ENCODE measurements at regions of chr5 and their contacts with region 1.

Region 1: GRCh38 chr5:35926389-35927051 is 11.9 kb downstream of the CAPSL start:
- DNase-seq: peak; percentile 63 to 78 (median 72)
- H3K4me3 ChIP-seq: no peak overlapping the region
- H3K4me3 Mint-ChIP-seq: peak overlapping the region in 6 of 8 donors; percentile 60 to 82 (median 76)
- H3K27ac ChIP-seq: no peak overlapping the region
- H3K27ac Mint-ChIP-seq: peak overlapping the region in 3 of 7 donors; percentile 1 to 80 (median 49)
- H3K4me1 ChIP-seq: peaks cover 20% of the 10 kb centered on the region
- H3K4me1 Mint-ChIP-seq: peaks cover 26 to 38% (median 34%) of the 10 kb centered on the region in 4 donors
- H3K27me3 ChIP-seq: no peaks in the 10 kb centered on the region
- H3K27me3 Mint-ChIP-seq: peaks cover 5 to 7% of the 10 kb centered on the region in 2 donors

Region 2: GRCh38 chr5:35202319-35203111 is 724.0 kb before region 1 on chr5:
- CTCF ChIA-PET with region 1: no interaction called
- POLR2A ChIA-PET with region 1: no interaction called
- intact Hi-C with region 1: loop called (anchors 1 kb)
- DNase-seq: peak in 4 of 5 donors; percentile 5 to 12 (median 10)
- H3K4me3 ChIP-seq: no peak overlapping the region
- H3K4me3 Mint-ChIP-seq: no peak overlapping the region
- H3K27ac ChIP-seq: no peak overlapping the region
- H3K27ac Mint-ChIP-seq: no peak overlapping the region
- H3K4me1 ChIP-seq: no peaks in the 10 kb centered on the region
- H3K4me1 Mint-ChIP-seq: peaks cover 0 to 2% (median 0%) of the 10 kb centered on the region in 4 donors
- H3K27me3 ChIP-seq: no peaks in the 10 kb centered on the region
- H3K27me3 Mint-ChIP-seq: peaks cover 15 to 23% of the 10 kb centered on the region in 2 donors

Region 3: DNA sequence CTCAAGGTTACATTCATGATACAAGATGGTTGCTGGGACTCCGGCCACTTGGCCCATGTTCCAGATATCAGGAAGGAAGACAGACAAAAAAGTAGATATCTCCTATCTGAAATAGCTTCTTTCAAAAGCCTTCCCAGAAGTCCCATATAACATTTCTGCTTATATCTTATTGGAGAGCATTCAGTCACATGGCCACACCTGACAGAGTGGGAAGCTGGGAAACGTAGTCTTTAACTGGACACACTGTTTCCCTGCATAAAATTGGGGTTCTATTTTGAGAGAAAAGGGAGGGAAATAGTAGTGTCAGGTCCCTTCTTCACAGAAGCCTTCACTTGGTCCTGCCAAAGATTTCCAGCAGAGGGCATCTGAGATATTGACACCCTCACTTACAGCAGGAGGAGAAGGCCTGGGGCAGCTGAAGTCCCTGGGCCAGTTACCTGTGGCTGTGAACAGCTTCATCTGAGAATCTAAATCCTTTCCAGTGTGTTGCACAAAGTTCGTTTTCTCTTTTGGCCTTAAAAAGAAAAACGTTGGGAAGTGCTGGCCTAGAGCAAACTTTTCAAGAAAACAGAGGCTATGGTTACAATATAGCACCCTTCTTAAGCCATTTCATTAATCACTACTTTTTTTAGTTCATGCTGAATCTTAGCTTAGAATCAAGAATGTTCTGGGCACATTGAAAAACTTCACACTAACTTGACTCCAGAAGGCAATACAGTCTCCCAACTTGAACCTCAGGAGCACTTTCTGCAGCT is 275.3 kb before region 1 on chr5:
- CTCF ChIA-PET with region 1: interaction called, 544 read pairs
- POLR2A ChIA-PET with region 1: interaction called, 48 read pairs
- intact Hi-C with region 1: loop called (anchors 1 kb)
- DNase-seq: peak; percentile 64 to 69 (median 68)
- H3K4me3 ChIP-seq: no peak overlapping the region
- H3K4me3 Mint-ChIP-seq: no peak overlapping the region
- H3K27ac ChIP-seq: no peak overlapping the region
- H3K27ac Mint-ChIP-seq: peak overlapping the region in 6 of 7 donors; percentile 16 to 74 (median 56)
- H3K4me1 ChIP-seq: peaks cover 4% of the 10 kb centered on the region
- H3K4me1 Mint-ChIP-seq: peaks cover 5 to 18% (median 14%) of the 10 kb centered on the region in 4 donors
- H3K27me3 ChIP-seq: no peaks in the 10 kb centered on the region
- H3K27me3 Mint-ChIP-seq: no peaks in the 10 kb centered on the region

Region 4: GRCh38 chr5:35771839-35772238 is 154.7 kb before region 1 on chr5:
- CTCF ChIA-PET with region 1: interaction called, 129 read pairs
- POLR2A ChIA-PET with region 1: interaction called, 25 read pairs
- intact Hi-C with region 1: loop called (anchors 1 kb)
- DNase-seq: no peak
- H3K4me3 ChIP-seq: no peak overlapping the region
- H3K4me3 Mint-ChIP-seq: no peak overlapping the region
- H3K27ac ChIP-seq: no peak overlapping the region
- H3K27ac Mint-ChIP-seq: no peak overlapping the region
- H3K4me1 ChIP-seq: peaks cover 18% of the 10 kb centered on the region
- H3K4me1 Mint-ChIP-seq: peaks cover 16 to 40% (median 30%) of the 10 kb centered on the region in 4 donors
- H3K27me3 ChIP-seq: no peaks in the 10 kb centered on the region
- H3K27me3 Mint-ChIP-seq: peaks cover 2% of the 10 kb centered on the region in 2 donors

Region 5: GRCh38 chr5:35852084-35852734 is 74.3 kb before region 1 on chr5:
- CTCF ChIA-PET with region 1: interaction called, 5 read pairs
- POLR2A ChIA-PET with region 1: interaction called, 23 read pairs
- intact Hi-C with region 1: no loop called
- DNase-seq: peak; percentile 60 to 81 (median 62)
- H3K4me3 ChIP-seq: peak overlapping the region; percentile 54 to 71
- H3K4me3 Mint-ChIP-seq: peak overlapping the region; percentile 87 to 99 (median 95)
- H3K27ac ChIP-seq: peak overlapping the region; percentile 97
- H3K27ac Mint-ChIP-seq: peak overlapping the region; percentile 94 to 100 (median 100)
- H3K4me1 ChIP-seq: peaks cover 75% of the 10 kb centered on the region
- H3K4me1 Mint-ChIP-seq: peaks cover 52 to 85% (median 70%) of the 10 kb centered on the region in 4 donors
- H3K27me3 ChIP-seq: no peaks in the 10 kb centered on the region
- H3K27me3 Mint-ChIP-seq: no peaks in the 10 kb centered on the region

Region 6: GRCh38 chr5:35884115-35884788 is 42.3 kb before region 1 on chr5:
- CTCF ChIA-PET with region 1: interaction called, 4 read pairs
- POLR2A ChIA-PET with region 1: interaction called, 23 read pairs
- intact Hi-C with region 1: loop called (anchors 2 kb)
- DNase-seq: no peak
- H3K4me3 ChIP-seq: no peak overlapping the region
- H3K4me3 Mint-ChIP-seq: peak overlapping the region in 2 of 8 donors; percentile 16 to 17
- H3K27ac ChIP-seq: no peak overlapping the region
- H3K27ac Mint-ChIP-seq: peak overlapping the region in 6 of 7 donors; percentile 9 to 61 (median 36)
- H3K4me1 ChIP-seq: peaks cover 33% of the 10 kb centered on the region
- H3K4me1 Mint-ChIP-seq: peaks cover 32 to 49% (median 39%) of the 10 kb centered on the region in 4 donors
- H3K27me3 ChIP-seq: no peaks in the 10 kb centered on the region
- H3K27me3 Mint-ChIP-seq: no peaks in the 10 kb centered on the region

Region 7: DNA sequence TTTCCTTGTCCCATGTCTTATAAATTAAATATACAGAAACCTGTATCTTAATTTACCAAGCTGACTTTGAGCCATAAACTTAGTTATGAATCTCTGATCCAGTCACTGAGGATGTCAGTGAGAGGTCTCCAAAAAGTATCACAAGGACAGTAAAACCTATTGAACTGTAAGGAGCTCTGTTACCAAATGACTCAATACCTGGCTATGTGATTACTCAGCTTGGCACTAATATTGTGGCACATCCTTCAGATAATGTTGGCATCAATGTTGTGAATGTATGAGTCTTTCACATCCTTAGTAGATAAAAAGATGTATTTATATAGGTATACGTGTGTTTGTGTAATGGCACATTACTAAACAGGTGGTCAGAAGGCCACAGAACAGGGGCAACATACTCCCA is 29.9 kb after region 1 on chr5:
- CTCF ChIA-PET with region 1: no interaction called
- POLR2A ChIA-PET with region 1: no interaction called
- intact Hi-C with region 1: no loop called
- DNase-seq: no peak
- H3K4me3 ChIP-seq: no peak overlapping the region
- H3K4me3 Mint-ChIP-seq: no peak overlapping the region
- H3K27ac ChIP-seq: no peak overlapping the region
- H3K27ac Mint-ChIP-seq: no peak overlapping the region
- H3K4me1 ChIP-seq: no peaks in the 10 kb centered on the region
- H3K4me1 Mint-ChIP-seq: peaks cover 0 to 8% (median 5%) of the 10 kb centered on the region in 4 donors
- H3K27me3 ChIP-seq: peaks cover 6% of the 10 kb centered on the region
- H3K27me3 Mint-ChIP-seq: peaks cover 40 to 55% of the 10 kb centered on the region in 2 donors

Region 8: DNA sequence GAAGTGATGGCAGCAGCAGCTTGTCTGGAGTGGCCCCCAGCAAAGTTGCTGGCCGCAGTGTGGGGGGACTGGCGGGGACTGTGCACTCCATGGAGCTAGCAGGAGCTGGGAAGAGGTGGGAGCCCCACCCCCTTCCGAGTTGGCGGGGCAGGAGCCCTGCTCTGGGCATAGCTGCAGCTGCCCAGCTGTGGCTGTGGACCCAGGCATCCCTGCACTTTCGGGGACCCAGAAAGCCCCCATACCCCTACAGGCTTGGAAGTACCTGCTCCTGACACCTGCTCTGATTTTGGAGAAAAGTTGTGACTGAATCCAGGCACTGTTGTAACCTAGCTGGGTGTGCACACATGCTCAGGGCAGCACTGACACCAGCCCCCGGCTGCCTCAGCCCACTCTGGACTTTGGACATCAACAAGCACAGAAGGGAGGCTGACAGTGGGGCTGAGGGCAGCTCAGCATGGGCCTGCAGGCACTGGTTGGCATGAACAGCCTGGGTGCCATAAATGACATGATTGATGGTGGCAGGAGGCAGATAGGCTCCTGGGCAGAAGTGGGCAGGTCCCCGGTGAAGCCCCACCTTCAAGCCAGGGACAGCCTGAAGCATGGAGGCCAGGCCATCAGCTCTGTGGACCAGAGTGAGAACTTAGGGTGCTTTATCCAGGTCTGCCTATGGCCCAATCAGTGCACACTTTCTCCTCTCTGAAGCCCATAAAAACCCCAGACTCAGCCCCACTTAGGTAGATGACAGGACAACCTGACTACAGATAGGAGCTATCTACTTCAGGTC is 212.6 kb after region 1 on chr5:
- CTCF ChIA-PET with region 1: no interaction called
- POLR2A ChIA-PET with region 1: no interaction called
- intact Hi-C with region 1: no loop called
- DNase-seq: no peak
- H3K4me3 ChIP-seq: no peak overlapping the region
- H3K4me3 Mint-ChIP-seq: no peak overlapping the region
- H3K27ac ChIP-seq: no peak overlapping the region
- H3K27ac Mint-ChIP-seq: no peak overlapping the region
- H3K4me1 ChIP-seq: no peaks in the 10 kb centered on the region
- H3K4me1 Mint-ChIP-seq: peaks cover 0 to 2% (median 0%) of the 10 kb centered on the region in 4 donors
- H3K27me3 ChIP-seq: no peaks in the 10 kb centered on the region
- H3K27me3 Mint-ChIP-seq: no peaks in the 10 kb centered on the region

Measured in CD4-positive, alpha-beta memory T cell (primary cell).